ENCODE measurements at regions of chr7 and their contacts with region 1.

Region 1: GRCh38 chr7:32891800-32892520 is 400 bp upstream of the KBTBD2 start:
- DNase-seq: peak; percentile 93 to 98 (median 97)
- ATAC-seq: peak; percentile 63 to 74 (median 70)
- H3K4me3 ChIP-seq: peak overlapping the region; percentile 65 to 89
- H3K4me3 Mint-ChIP-seq: peak overlapping the region; percentile 84 to 98 (median 92)
- H3K27ac ChIP-seq: peak overlapping the region; percentile 98
- H3K27ac Mint-ChIP-seq: peak overlapping the region; percentile 97 to 98
- H3K4me1 ChIP-seq: peaks cover 27% of the 10 kb centered on the region in 2 experiments
- H3K4me1 Mint-ChIP-seq: peaks cover 47 to 58% (median 54%) of the 10 kb centered on the region in 3 donors
- H3K27me3 ChIP-seq: no peaks in the 10 kb centered on the region
- H3K27me3 Mint-ChIP-seq: peaks cover 0 to 4% of the 10 kb centered on the region in 2 donors

Region 2: DNA sequence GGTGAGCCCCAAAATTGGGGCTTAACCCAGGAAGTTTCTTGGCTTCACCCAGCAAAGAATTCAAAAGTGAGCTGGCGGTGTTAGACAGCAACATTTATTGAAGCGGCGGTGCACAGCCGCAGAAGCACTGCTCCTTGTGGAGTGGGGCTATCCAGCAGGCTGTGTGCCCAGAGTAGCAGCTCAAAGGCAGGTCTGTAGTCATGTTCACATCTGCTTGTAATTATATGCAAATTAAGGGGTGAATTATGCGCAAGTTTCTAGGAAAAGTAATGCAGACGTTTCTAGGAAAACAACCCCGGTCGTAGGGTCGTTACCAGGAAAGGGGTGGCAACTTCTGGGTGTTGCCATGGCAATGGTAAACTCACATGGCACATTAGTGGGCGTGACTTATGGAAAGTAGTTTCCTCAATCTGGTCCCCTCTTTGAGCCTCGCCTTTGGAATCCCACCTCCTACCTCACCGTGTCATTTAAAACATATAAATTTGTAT is 13.3 kb after region 1 on chr7:
- CTCF ChIA-PET with region 1: interaction called, 8 to 14 read pairs
- POLR2A ChIA-PET with region 1: interaction called, 12 to 68 read pairs
- DNase-seq: peak; percentile 18 to 86 (median 63)
- ATAC-seq: peak; percentile 87 to 92 (median 88)
- H3K4me3 ChIP-seq: peak overlapping the region; percentile 31 to 66
- H3K4me3 Mint-ChIP-seq: peak overlapping the region; percentile 75 to 79 (median 77)
- H3K27ac ChIP-seq: peak overlapping the region; percentile 82
- H3K27ac Mint-ChIP-seq: peak overlapping the region; percentile 91 to 94
- H3K4me1 ChIP-seq: peaks cover 4 to 25% of the 10 kb centered on the region in 2 experiments
- H3K4me1 Mint-ChIP-seq: peaks cover 15 to 18% (median 18%) of the 10 kb centered on the region in 3 donors
- H3K27me3 ChIP-seq: no peaks in the 10 kb centered on the region
- H3K27me3 Mint-ChIP-seq: no peaks in the 10 kb centered on the region

Region 3: DNA sequence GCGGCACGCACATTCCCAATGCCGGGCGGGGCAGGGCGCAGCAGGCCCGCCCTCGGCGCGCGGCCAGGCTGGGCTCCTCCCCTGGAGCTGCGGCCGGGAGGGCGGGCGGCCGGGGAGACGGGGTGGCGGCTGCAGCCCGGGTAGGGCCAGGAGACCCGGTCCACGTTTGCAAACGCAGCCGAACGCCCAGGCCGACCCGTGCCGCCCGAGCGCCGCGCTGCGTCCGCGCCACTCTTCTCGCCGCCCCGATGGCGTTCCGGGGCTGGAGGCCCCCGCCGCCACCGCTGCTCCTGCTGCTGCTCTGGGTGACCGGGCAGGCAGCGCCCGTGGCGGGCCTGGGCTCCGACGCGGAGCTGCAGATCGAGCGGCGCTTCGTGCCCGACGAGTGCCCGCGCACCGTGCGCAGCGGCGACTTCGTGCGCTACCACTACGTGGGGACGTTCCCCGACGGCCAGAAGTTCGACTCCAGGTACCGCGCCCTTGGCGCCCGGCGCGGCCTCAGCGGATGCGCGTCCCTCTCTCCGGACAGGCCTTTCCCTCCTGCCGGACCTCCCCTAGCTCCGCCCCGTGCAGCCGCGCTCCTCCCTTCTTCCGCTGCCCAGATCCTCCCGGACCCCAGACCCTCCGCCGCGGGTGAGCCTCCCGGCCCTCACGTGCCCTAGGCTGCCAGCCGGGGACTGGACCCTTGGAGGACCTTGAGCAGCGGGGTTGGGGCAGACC is 65.5 kb after region 1 on chr7 and contains the start of gene FKBP9:
- CTCF ChIA-PET with region 1: no interaction called
- POLR2A ChIA-PET with region 1: no interaction called
- DNase-seq: peak in 2 of 35 experiments; percentile 3
- ATAC-seq: peak; percentile 34 to 55 (median 46)
- H3K4me3 ChIP-seq: peak within 1 kb of the TSS; percentile 28 to 64
- H3K4me3 Mint-ChIP-seq: peak within 1 kb of the TSS; percentile 57 to 85 (median 72)
- H3K27ac ChIP-seq: no peak within 1 kb of the TSS
- H3K27ac Mint-ChIP-seq: peak within 1 kb of the TSS in 1 of 2 donors; percentile 8
- H3K4me1 ChIP-seq: peaks cover 4 to 10% of the 10 kb centered on the region in 2 experiments
- H3K4me1 Mint-ChIP-seq: peaks cover 4 to 6% (median 5%) of the 10 kb centered on the region in 3 donors
- H3K27me3 ChIP-seq: peaks cover 2 to 32% of the 10 kb centered on the region in 2 experiments
- H3K27me3 Mint-ChIP-seq: peaks cover 27 to 40% of the 10 kb centered on the region in 2 donors
- total RNA-seq, gene FKBP9: 1.1 to 1.9 (median 1.6) TPM in 3 of 5 donors, not detected in the others